GM12878 (cell line): ENCODE measurements at regions of chr16 and their contacts with region 1.

Region 1: GRCh38 chr16:24010440-24011089 is 174.8 kb downstream of the PRKCB start:
- DNase-seq: peak; percentile 60
- ATAC-seq: peak; percentile 61
- H3K4me3 ChIP-seq: no peak overlapping the region
- H3K27ac ChIP-seq: peak overlapping the region; percentile 53; the same call in 1 of the 2 replicates
- H3K4me1 ChIP-seq: peaks cover 65% of the 10 kb centered on the region
- H3K27me3 ChIP-seq: no peaks in the 10 kb centered on the region
- CTCF ChIP-seq: peak; percentile 71 to 84 (median 81)
- EP300 ChIP-seq: no peak
- POLR2A ChIP-seq: no peak
- RAD21 ChIP-seq: peak; percentile 90

Region 2: GRCh38 chr16:23741675-23742303 is 268.8 kb before region 1 on chr16:
- CTCF ChIA-PET with region 1: no interaction called
- POLR2A ChIA-PET with region 1: no interaction called
- RAD21 ChIA-PET with region 1: no interaction called
- SMC1A ChIA-PET with region 1: no interaction called
- in situ Hi-C with region 1: no loop called
- intact Hi-C with region 1: no loop called
- DNase-seq: no peak
- ATAC-seq: no peak
- H3K4me3 ChIP-seq: no peak overlapping the region
- H3K27ac ChIP-seq: no peak overlapping the region
- H3K4me1 ChIP-seq: no peaks in the 10 kb centered on the region
- H3K27me3 ChIP-seq: no peaks in the 10 kb centered on the region; a peak in 2 of 4 replicates
- CTCF ChIP-seq: no peak
- EP300 ChIP-seq: no peak
- POLR2A ChIP-seq: no peak
- RAD21 ChIP-seq: no peak

Region 3: GRCh38 chr16:23826528-23827045 is 184.0 kb before region 1 on chr16:
- CTCF ChIA-PET with region 1: interaction called, 6 read pairs
- POLR2A ChIA-PET with region 1: no interaction called
- RAD21 ChIA-PET with region 1: interaction called, 3 read pairs
- SMC1A ChIA-PET with region 1: interaction called, 12 read pairs
- in situ Hi-C with region 1: no loop called
- intact Hi-C with region 1: no loop called
- DNase-seq: peak; percentile 79
- ATAC-seq: peak; percentile 91
- H3K4me3 ChIP-seq: 0 out of 2 replicates have a peak overlapping the region, but pooled peaks have one; percentile 1
- H3K27ac ChIP-seq: peak overlapping the region; percentile 63
- H3K4me1 ChIP-seq: peaks cover 21% of the 10 kb centered on the region
- H3K27me3 ChIP-seq: no peaks in the 10 kb centered on the region
- CTCF ChIP-seq: no peak
- EP300 ChIP-seq: peak in 1 of 2 experiments; percentile 13; a peak in 1 of 4 replicates
- POLR2A ChIP-seq: no peak
- RAD21 ChIP-seq: no peak

Region 4: DNA sequence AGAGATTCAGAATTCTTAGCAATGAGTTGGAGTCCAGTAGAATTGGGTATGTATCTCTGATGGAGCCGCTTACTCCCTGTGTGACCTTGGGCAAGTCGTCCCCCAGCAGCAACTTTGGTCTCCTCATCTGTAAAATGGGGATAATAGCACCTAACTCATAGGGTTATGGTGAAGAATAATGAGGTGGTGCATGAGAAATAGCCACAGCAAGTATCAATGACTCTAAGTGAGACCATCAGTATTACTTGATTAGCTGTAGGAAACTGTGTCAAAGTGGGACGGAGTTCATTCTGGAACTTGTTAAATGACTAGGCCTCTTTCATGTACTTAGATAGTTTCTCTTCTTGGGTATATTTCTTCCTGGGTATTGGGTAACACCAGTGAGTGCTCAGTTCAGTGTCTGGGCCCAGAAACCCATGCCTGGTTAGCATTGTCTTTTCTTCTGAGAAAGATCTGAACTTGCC is 168.4 kb before region 1 on chr16:
- CTCF ChIA-PET with region 1: interaction called, 38 read pairs
- POLR2A ChIA-PET with region 1: interaction called, 3 read pairs
- RAD21 ChIA-PET with region 1: interaction called, 39 read pairs
- SMC1A ChIA-PET with region 1: interaction called, 100 read pairs
- in situ Hi-C with region 1: no loop called
- intact Hi-C with region 1: loop called (anchors 1 kb)
- DNase-seq: peak; percentile 96
- ATAC-seq: peak; percentile 76
- H3K4me3 ChIP-seq: peak overlapping the region; percentile 58; the same call in 1 of the 2 replicates
- H3K27ac ChIP-seq: peak overlapping the region; percentile 80
- H3K4me1 ChIP-seq: peaks cover 40% of the 10 kb centered on the region
- H3K27me3 ChIP-seq: no peaks in the 10 kb centered on the region
- CTCF ChIP-seq: no peak
- EP300 ChIP-seq: peak; percentile 82 to 95
- POLR2A ChIP-seq: no peak
- RAD21 ChIP-seq: 0 out of 2 replicates have a peak, but pooled peaks have one; percentile 21

Region 5: DNA sequence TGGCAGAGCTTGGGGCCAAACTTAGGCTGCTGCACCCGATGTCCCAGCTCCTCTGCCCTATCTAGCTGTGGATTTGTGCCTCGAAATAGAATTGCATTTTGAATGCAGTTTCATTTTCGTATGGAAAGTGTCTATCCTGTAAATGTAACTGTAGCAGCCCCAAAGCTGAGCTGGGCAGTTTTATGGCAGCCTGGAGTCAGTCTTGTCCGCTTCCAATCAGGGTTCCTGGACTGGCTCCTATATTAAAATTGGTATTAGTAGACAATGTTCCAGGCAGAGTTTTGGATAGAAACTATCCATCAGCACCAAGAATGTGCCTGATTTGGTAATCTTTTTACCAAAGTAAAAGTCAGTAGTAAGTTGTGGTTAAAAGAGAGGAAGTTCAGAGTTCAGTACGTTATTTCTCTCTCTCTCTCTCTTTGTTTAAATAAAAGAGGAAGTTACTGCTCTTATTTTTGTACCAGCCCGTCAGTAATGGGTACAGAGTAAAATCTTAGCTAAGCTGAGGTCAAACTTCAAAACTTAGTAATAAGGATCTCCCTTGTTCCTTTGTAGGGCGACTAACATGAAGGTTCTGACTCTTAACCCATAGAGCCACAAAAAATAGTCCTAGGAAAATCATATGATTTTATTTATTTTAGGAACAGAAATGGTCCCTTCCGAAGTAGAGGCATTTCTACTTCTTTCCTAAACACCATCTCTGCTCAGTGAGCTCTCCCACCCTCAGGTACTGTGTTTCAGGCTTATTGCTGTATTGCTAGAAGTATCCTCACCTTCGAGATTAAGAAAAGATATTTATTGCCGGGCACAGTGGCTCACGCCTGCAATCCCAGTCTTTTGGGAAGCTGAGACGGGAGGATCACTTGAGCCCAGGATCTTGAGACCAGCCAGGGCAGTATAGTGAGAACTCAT is 146.8 kb before region 1 on chr16:
- CTCF ChIA-PET with region 1: interaction called, 30 read pairs
- POLR2A ChIA-PET with region 1: interaction called, 4 read pairs
- RAD21 ChIA-PET with region 1: interaction called, 13 read pairs
- SMC1A ChIA-PET with region 1: interaction called, 14 read pairs
- in situ Hi-C with region 1: no loop called
- intact Hi-C with region 1: loop called (anchors 5 kb)
- DNase-seq: no peak
- ATAC-seq: peak; percentile 85
- H3K4me3 ChIP-seq: peak overlapping the region; percentile 55
- H3K27ac ChIP-seq: peak overlapping the region; percentile 98
- H3K4me1 ChIP-seq: peaks cover 62% of the 10 kb centered on the region
- H3K27me3 ChIP-seq: no peaks in the 10 kb centered on the region
- CTCF ChIP-seq: no peak
- EP300 ChIP-seq: peak; percentile 85 to 95
- POLR2A ChIP-seq: 0 out of 2 replicates have a peak, but pooled peaks have one; percentile 22
- RAD21 ChIP-seq: no peak

Region 6: GRCh38 chr16:23901178-23902033 is 109.2 kb before region 1 on chr16:
- CTCF ChIA-PET with region 1: interaction called, 5 read pairs
- POLR2A ChIA-PET with region 1: no interaction called
- RAD21 ChIA-PET with region 1: interaction called, 5 read pairs
- SMC1A ChIA-PET with region 1: interaction called, 11 read pairs
- in situ Hi-C with region 1: no loop called
- intact Hi-C with region 1: no loop called
- DNase-seq: no peak
- ATAC-seq: no peak
- H3K4me3 ChIP-seq: no peak overlapping the region
- H3K27ac ChIP-seq: no peak overlapping the region; the same call in none of the 2 replicates
- H3K4me1 ChIP-seq: peaks cover 9% of the 10 kb centered on the region
- H3K27me3 ChIP-seq: no peaks in the 10 kb centered on the region
- CTCF ChIP-seq: no peak
- EP300 ChIP-seq: no peak
- POLR2A ChIP-seq: no peak
- RAD21 ChIP-seq: no peak

Region 7: DNA sequence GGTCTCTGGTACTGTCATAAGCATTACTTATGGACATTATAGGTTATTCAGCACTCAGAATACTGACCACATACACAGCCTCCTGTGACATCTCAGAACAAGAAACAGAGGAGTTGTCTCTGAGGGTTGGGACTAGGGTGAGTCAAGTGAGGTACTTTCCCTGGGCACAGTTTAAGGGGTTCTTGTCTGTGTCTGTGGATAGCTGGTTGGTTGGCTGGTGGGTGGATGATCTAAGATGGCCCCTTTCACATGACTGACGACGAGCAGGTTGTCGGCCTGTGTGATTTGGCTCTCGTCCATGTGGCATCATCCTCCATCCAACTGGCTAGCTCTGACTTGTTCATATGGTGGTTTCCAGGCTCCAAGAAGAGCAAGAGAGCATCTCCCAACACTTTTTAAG is 10.9 kb before region 1 on chr16:
- CTCF ChIA-PET with region 1: interaction called, 25 read pairs
- POLR2A ChIA-PET with region 1: interaction called, 4 read pairs
- RAD21 ChIA-PET with region 1: interaction called, 8 read pairs
- SMC1A ChIA-PET with region 1: interaction called, 12 read pairs
- in situ Hi-C with region 1: no loop called
- intact Hi-C with region 1: no loop called
- DNase-seq: peak; percentile 47
- ATAC-seq: peak; percentile 93
- H3K4me3 ChIP-seq: no peak overlapping the region
- H3K27ac ChIP-seq: peak overlapping the region; percentile 27; the same call in 1 of the 2 replicates
- H3K4me1 ChIP-seq: peaks cover 17% of the 10 kb centered on the region
- H3K27me3 ChIP-seq: no peaks in the 10 kb centered on the region
- CTCF ChIP-seq: no peak
- EP300 ChIP-seq: no peak
- POLR2A ChIP-seq: 0 out of 2 replicates have a peak, but pooled peaks have one; percentile 27
- RAD21 ChIP-seq: no peak